Activated CD4-positive, alpha-beta memory T cell treated with anti-CD3 and anti-CD28 coated beads for 36 hours (primary cell): ENCODE measurements at regions of chr19 and their contacts with region 1.

Region 1: GRCh38 chr19:6481541-6482342 is at the start of gene DENND1C:
- DNase-seq: peak; percentile 85
- H3K4me3 Mint-ChIP-seq: peak within 1 kb of the TSS; percentile 100
- H3K27ac Mint-ChIP-seq: peak within 1 kb of the TSS; percentile 98
- H3K4me1 Mint-ChIP-seq: peaks cover 30% of the 10 kb centered on the region
- H3K27me3 Mint-ChIP-seq: no peaks in the 10 kb centered on the region
- total RNA-seq, gene DENND1C: 62.1 to 69.3 TPM

Region 2: GRCh38 chr19:6503407-6504201 is 21.9 kb after region 1 on chr19:
- CTCF ChIA-PET with region 1: interaction called, 7 read pairs
- POLR2A ChIA-PET with region 1: interaction called, 4 read pairs
- intact Hi-C with region 1: loop called (anchors 2 kb)
- DNase-seq: no peak
- H3K4me3 Mint-ChIP-seq: no peak overlapping the region
- H3K27ac Mint-ChIP-seq: no peak overlapping the region
- H3K4me1 Mint-ChIP-seq: peaks cover 10% of the 10 kb centered on the region
- H3K27me3 Mint-ChIP-seq: peaks cover 17% of the 10 kb centered on the region